Aorta (tissue), 5 donors: ENCODE measurements at regions of chr14 and their contacts with region 1.

Region 1: DNA sequence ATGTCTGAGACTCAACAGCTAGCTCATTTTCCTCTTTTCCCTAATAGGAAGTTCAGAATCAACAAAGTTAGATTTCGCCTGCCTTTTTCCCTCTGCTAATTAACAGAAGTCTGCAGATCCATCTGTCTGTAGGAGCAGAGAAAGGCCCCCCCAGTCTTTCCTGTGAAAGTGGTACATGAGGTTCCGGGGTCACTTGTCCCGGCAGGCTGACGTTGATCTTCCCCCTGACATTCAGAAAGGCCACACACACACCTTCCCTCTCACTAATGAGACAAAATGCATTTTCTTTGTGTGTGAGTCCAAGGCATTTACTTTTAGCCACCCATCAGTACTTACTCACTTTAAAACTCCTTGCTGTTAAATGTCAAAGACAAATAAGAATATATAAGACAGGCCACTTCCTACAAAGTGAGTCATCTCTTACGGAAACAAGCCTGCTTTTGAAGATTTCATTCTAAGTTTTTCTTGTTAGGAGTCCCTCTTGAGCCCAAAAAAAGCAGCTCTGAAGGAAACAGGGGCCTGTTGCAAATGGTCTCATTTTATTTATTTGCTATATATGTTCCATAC is 138.7 kb downstream of the TTC7B start:
- DNase-seq: no peak
- ATAC-seq: no peak
- H3K4me3 ChIP-seq: no peak overlapping the region
- H3K27ac ChIP-seq: peak overlapping the region; percentile 45 to 55
- H3K4me1 ChIP-seq: no peaks in the 10 kb centered on the region
- H3K27me3 ChIP-seq: no peaks in the 10 kb centered on the region

Region 2: DNA sequence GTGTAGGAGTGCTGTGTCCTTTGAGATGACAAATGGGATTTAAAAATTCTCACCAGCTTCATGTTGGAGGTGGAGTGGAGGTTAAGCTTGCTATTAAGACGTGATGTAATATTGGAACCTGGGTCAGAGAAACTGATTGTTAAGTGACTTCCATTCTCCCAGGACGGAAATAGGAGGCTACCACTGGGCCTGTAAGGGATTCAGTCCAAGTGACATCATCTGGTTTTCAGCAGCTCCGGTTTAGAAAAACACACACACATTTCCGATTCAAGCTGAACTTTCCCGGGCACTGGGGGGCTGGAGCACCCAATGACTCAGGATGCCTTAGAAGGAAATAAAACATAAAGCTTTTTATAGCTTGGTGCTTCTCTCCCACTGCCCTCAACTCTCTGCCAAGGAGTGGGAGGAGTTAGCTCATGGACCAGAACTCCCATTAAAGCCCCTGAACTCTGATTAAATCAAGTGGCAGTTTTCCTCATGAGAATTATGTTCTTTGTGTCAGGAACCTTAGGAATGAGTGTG is 268.3 kb before region 1 on chr14:
- intact Hi-C with region 1: loop called in 1 of 2 experiments (anchors 5 kb)
- DNase-seq: peak; percentile 88 to 89
- ATAC-seq: peak; percentile 92
- H3K4me3 ChIP-seq: no peak overlapping the region
- H3K27ac ChIP-seq: peak overlapping the region; percentile 96 to 99
- H3K4me1 ChIP-seq: no peaks in the 10 kb centered on the region
- H3K27me3 ChIP-seq: no peaks in the 10 kb centered on the region

Region 3: GRCh38 chr14:90545966-90546751 is 131.4 kb before region 1 on chr14:
- intact Hi-C with region 1: loop called in 1 of 2 experiments (anchors 10 kb)
- DNase-seq: peak; percentile 84 to 85
- ATAC-seq: peak; percentile 80
- H3K4me3 ChIP-seq: no peak overlapping the region
- H3K27ac ChIP-seq: peak overlapping the region in 1 of 2 donors; percentile 77
- H3K4me1 ChIP-seq: no peaks in the 10 kb centered on the region
- H3K27me3 ChIP-seq: no peaks in the 10 kb centered on the region

Region 4: DNA sequence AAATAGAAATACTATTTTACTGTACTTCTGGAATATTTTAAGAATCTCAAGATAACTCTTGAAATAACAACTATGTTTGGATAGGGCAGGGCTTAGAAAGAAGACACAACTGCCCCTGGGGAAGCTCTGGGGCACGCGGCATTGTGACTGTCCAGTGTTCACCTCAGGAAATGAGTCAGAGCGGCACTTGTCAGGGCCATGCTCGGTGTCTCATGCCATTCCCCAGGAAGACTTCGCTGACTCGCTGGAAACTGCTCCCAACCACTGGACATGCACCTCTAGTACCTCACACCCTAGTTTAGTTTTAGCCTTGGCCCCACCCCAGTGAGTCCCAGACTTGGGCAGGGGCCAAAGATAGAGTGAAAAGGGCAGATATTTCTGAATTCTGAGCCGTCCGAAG is 53.3 kb before region 1 on chr14:
- intact Hi-C with region 1: loop called in 1 of 2 experiments (anchors 5 kb)
- DNase-seq: peak in 1 of 2 donors; percentile 84
- ATAC-seq: no peak
- H3K4me3 ChIP-seq: no peak overlapping the region
- H3K27ac ChIP-seq: no peak overlapping the region
- H3K4me1 ChIP-seq: no peaks in the 10 kb centered on the region
- H3K27me3 ChIP-seq: no peaks in the 10 kb centered on the region